ENCODE measurements at regions of chr22 and their contacts with region 1.

Region 1: GRCh38 chr22:36528795-36529751 is at the start of gene EIF3D:
- DNase-seq: peak; percentile 99
- total RNA-seq, gene EIF3D: 82.3 TPM

Region 2: GRCh38 chr22:36481393-36482168 is 47.5 kb before region 1 on chr22 and contains the start of gene TXN2:
- intact Hi-C with region 1: no loop called
- DNase-seq: peak; percentile 97
- total RNA-seq, gene TXN2: 92.8 TPM

Region 3: GRCh38 chr22:36506637-36507517 is 22.2 kb before region 1 on chr22 and contains the start of gene FOXRED2:
- intact Hi-C with region 1: loop called (anchors 2 kb)
- DNase-seq: peak; percentile 95
- total RNA-seq, gene FOXRED2: 3.8 TPM

Region 4: GRCh38 chr22:36628571-36629065 is 99.5 kb after region 1 on chr22:
- intact Hi-C with region 1: no loop called
- DNase-seq: no peak

Measured in cardiac septum (tissue), 1 donor.